HepG2 (cell line): ENCODE measurements at regions of chr6 and their contacts with region 1.

Region 1: DNA sequence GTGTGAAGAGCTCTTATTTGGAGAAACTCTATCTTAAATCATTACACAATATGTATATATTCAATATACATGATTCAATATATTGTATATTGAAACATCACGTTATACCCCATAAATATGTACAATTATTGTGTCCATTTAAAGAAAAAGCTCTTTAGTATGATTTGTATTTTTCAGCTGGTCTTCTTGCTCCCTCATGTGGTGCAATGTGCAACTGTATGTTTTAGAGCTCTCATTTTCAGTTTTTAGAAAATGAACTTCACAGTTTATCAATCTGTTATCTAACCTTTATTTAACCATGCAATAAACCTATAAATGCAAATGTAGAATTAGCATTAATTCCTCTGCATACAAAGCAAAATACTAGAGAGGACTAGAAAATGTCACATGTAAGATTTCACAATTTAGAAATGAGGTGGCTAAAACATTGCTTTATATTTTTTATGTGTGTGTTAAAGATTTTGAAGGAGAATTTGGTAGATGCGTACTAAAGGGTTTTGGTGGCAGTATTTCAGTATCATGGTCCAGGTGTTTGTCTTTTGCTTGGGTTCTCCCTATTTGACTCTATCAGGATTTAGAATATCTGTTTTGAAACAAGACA is 167.1 kb downstream of the PHF3 start:
- DNase-seq: peak; percentile 31
- ATAC-seq: no peak
- H3K4me3 ChIP-seq: no peak overlapping the region
- H3K27ac ChIP-seq: no peak overlapping the region
- H3K4me1 ChIP-seq: peaks cover 49% of the 10 kb centered on the region
- H3K27me3 ChIP-seq: no peaks in the 10 kb centered on the region
- CTCF ChIP-seq: peak; percentile 66
- EP300 ChIP-seq: no peak
- POLR2A ChIP-seq: no peak
- RAD21 ChIP-seq: peak; percentile 54; the same call in 1 of the 2 replicates

Region 2: DNA sequence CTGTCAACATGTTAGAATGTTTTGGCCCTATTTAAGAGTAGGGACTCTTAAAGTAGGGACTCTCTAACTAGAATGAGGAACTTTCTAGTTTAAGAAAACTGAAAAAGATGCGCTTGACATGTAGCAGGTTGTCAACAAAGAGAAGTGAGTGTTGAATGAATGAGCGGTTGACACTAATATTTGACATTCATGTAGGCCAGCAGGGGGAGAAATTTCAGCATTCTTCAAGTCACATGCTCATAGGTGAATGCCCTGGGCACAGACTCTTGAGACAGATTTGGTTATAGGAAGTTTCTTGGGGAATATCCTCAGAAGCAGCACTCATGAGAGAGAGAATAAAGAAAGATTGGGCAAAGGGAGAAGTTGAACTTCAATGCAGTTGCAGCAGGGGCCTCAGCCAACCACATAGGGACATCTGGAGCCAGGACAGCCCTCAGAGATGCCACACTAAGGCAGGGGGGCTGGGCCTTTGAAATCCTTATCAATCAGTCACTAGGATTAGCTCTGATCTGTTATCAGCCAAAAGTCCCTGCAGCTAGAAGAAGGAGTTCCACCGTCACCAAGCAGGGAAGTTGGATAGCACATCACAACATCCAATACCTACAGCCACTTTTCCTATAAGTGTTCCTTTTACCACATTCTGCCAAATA is 736.5 kb before region 1 on chr6:
- CTCF ChIA-PET with region 1: no interaction called
- POLR2A ChIA-PET with region 1: no interaction called
- in situ Hi-C with region 1: loop called (anchors 25 kb)
- intact Hi-C with region 1: loop called (anchors 1 kb)
- DNase-seq: peak; percentile 35
- ATAC-seq: peak; percentile 83
- H3K4me3 ChIP-seq: no peak overlapping the region
- H3K27ac ChIP-seq: no peak overlapping the region
- H3K4me1 ChIP-seq: no peaks in the 10 kb centered on the region
- H3K27me3 ChIP-seq: no peaks in the 10 kb centered on the region
- CTCF ChIP-seq: peak; percentile 59
- EP300 ChIP-seq: no peak
- POLR2A ChIP-seq: no peak
- RAD21 ChIP-seq: no peak; the same call in 1 of the 2 replicates

Region 3: DNA sequence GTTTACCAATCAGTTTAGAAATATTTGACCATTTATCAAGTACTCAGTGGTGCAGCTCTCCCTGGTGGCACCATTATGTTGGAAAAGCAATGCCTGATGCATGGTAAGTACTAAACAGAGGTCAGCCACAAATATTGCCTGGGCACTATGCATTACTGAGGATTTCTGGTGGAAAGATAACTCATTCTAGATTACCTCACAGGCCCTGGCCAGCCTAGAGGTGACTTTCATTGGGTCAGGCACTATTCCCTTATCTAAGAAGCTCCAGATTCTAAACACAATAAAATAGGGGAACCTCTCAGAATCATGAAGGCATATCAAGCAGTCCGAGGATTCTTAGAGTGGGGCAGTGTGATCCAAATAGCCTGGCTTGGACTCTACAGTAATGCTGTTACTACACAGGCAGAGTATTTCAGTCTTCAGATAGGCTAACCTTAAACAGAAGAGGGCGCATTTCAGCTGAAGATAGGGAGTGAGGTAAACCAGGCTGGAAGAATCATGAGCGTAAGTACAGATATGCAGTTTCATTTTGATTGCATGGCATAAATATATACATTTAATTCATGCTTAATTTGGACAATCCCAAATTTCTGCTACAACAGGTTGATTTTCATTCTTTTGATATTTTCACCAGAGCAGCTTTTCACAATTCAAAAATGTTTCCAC is 495.0 kb before region 1 on chr6:
- CTCF ChIA-PET with region 1: interaction called, 12 read pairs
- POLR2A ChIA-PET with region 1: no interaction called
- in situ Hi-C with region 1: no loop called
- intact Hi-C with region 1: loop called (anchors 1 kb)
- DNase-seq: peak; percentile 72
- ATAC-seq: peak; percentile 100
- H3K4me3 ChIP-seq: peak overlapping the region in 1 of 3 experiments; percentile 2; a peak in 2 of 6 replicates
- H3K27ac ChIP-seq: no peak overlapping the region
- H3K4me1 ChIP-seq: peaks cover 18% of the 10 kb centered on the region
- H3K27me3 ChIP-seq: no peaks in the 10 kb centered on the region
- CTCF ChIP-seq: peak; percentile 84
- EP300 ChIP-seq: no peak
- POLR2A ChIP-seq: no peak
- RAD21 ChIP-seq: peak; percentile 73

Region 4: GRCh38 chr6:63764318-63764916 is 38.3 kb before region 1 on chr6:
- CTCF ChIA-PET with region 1: no interaction called
- POLR2A ChIA-PET with region 1: no interaction called
- in situ Hi-C with region 1: no loop called
- intact Hi-C with region 1: loop called (anchors 2 kb)
- DNase-seq: peak; percentile 65
- ATAC-seq: no peak
- H3K4me3 ChIP-seq: no peak overlapping the region
- H3K27ac ChIP-seq: no peak overlapping the region
- H3K4me1 ChIP-seq: no peaks in the 10 kb centered on the region
- H3K27me3 ChIP-seq: no peaks in the 10 kb centered on the region
- CTCF ChIP-seq: peak; percentile 46; the same call in 1 of the 2 replicates
- EP300 ChIP-seq: no peak
- POLR2A ChIP-seq: no peak
- RAD21 ChIP-seq: no peak

Region 5: DNA sequence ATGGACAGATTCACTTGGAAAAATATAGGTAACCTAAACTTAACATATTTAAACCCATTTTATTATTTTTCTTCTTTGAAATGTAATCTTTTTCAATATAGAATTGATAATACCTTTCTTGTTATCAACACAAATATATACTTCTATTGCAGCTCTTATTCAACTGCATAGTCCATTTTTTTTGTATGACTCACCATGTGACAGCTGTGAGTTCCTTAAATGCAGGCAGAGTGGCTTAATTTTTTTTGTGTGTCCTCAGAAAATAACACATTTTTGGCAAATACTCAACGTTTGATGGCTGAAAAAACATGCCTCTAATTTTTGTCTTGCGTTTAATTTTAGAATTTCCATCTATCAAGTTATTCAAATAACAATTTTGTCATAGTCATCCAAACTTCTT is 287.6 kb after region 1 on chr6:
- CTCF ChIA-PET with region 1: no interaction called
- POLR2A ChIA-PET with region 1: no interaction called
- in situ Hi-C with region 1: no loop called
- intact Hi-C with region 1: no loop called
- DNase-seq: no peak
- ATAC-seq: no peak
- H3K4me3 ChIP-seq: no peak overlapping the region
- H3K27ac ChIP-seq: no peak overlapping the region
- H3K4me1 ChIP-seq: peaks cover under 1% of the 10 kb centered on the region; the same call in 1 of the 2 replicates
- H3K27me3 ChIP-seq: peaks cover 0 to 5% of the 10 kb centered on the region in 2 experiments; a peak in 1 of 5 replicates
- CTCF ChIP-seq: no peak
- EP300 ChIP-seq: no peak
- POLR2A ChIP-seq: no peak
- RAD21 ChIP-seq: no peak

Region 6: DNA sequence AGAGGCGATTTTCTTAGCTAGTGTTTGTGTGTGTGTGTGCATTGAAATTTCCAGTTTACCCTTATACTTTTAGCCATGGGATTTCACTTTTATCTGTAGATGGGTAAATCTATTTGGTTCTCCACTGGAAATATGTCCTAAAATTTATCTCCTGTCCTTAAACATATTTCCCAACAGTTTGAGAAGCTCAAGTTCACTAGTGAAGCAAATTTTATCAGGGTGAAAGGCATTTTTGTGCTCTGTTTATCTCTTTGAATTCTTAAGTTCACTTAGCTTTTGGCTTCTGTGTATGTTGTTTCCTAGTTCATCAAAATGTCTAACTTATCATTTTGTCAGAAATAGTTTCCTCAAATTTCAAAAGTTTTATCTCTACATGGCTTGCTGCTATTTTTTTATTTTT is 394.5 kb after region 1 on chr6:
- CTCF ChIA-PET with region 1: no interaction called
- POLR2A ChIA-PET with region 1: no interaction called
- in situ Hi-C with region 1: no loop called
- intact Hi-C with region 1: no loop called
- DNase-seq: no peak
- ATAC-seq: no peak
- H3K4me3 ChIP-seq: no peak overlapping the region
- H3K27ac ChIP-seq: no peak overlapping the region
- H3K4me1 ChIP-seq: no peaks in the 10 kb centered on the region
- H3K27me3 ChIP-seq: no peaks in the 10 kb centered on the region
- CTCF ChIP-seq: no peak
- EP300 ChIP-seq: no peak
- POLR2A ChIP-seq: no peak
- RAD21 ChIP-seq: no peak